ENCODE measurements at regions of chrX and their contacts with region 1.

Region 1: DNA sequence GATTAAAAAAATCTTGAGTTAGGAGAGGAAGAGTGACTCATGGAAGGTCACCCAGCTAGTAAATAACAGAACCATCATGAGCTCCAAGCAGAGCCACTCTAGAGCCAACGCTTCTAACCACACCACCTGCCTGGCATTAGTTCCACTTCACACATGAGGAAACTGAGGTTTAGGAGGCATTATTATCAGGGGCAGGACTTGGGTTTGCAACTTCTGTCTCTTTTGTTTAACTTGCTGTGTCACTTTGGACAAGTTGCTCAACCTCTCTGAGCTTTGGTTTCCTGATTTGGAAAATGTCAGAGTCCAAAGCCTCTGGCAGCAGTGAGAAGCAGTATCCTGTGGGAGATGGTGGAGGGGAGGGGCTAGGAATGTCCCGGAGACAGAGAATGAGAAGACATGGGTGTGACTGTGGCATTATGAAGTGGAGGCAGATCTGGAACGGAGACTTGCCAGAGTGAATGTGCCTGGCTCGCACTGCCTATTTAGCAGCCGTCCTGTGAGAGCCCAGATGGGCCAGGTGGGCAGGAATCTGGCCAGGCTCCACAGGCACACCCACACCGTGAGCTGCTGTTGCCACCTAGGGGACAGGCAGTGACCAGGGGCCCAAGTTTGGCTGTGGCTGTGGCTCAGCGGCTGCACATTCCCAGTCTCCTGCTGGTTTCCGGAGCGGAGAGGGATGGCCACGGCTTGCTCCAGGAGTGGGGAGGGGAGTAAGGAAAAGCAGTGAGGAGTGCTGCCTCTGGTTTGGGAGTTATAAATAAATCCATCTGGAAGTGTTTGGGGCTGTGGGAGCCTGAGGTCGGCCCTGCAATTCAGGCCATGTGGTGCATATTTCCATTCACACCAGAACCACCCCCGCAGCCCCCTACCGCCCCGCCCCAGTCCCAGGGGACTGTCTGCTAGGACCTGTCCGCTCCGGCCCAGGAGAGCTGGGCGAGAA is 93.4 kb downstream of the NHSL2 start:
- DNase-seq: no peak
- ATAC-seq: peak; percentile 32
- H3K4me3 ChIP-seq: no peak overlapping the region
- H3K27ac ChIP-seq: no peak overlapping the region
- H3K4me1 ChIP-seq: no peaks in the 10 kb centered on the region
- H3K27me3 ChIP-seq: no peaks in the 10 kb centered on the region
- CTCF ChIP-seq: no peak

Region 2: DNA sequence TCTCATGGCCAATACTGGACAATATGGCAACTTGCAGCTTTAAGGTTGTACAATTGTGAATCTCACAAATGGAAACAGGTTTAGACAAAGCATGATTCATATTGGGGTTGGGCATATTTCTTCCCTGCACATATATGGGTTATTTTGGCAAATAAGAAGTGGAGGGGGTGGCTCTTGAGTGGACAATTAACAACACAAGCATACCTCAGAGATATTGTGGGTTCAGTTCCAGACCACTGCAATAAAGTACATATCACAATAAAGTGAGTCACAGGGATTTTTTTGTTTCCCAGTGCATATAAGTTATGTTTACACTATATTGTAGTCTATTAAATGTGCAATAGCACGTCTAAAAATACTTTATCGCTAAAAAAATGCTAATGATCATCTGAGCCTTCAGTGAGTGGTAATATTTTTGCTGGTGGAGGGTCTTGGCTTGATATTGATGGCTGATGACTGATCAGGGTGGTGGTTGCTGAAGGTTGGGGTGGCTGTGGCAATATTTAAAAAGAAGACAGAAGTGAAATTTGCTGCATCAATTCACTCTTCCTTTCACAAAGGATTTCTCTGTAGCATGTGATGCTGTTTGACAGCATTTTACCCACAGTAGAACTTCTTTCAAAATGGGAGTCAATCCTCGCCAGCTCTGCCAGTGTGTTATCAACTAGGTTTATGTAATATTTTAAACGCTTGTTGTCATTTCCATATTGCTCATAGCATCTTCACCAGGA is 521.7 kb before region 1 on chrX:
- intact Hi-C with region 1: no loop called
- DNase-seq: no peak
- ATAC-seq: no peak
- H3K4me3 ChIP-seq: no peak overlapping the region
- H3K27ac ChIP-seq: no peak overlapping the region
- H3K4me1 ChIP-seq: no peaks in the 10 kb centered on the region
- H3K27me3 ChIP-seq: no peaks in the 10 kb centered on the region
- CTCF ChIP-seq: no peak

Region 3: GRCh38 chrX:71949844-71950445 is 54.1 kb before region 1 on chrX:
- intact Hi-C with region 1: no loop called
- DNase-seq: no peak
- ATAC-seq: no peak
- H3K4me3 ChIP-seq: no peak overlapping the region
- H3K27ac ChIP-seq: no peak overlapping the region
- H3K4me1 ChIP-seq: no peaks in the 10 kb centered on the region
- H3K27me3 ChIP-seq: no peaks in the 10 kb centered on the region
- CTCF ChIP-seq: no peak

Region 4: GRCh38 chrX:72131317-72132294 is 127.5 kb after region 1 on chrX and contains the start of gene RTL5:
- intact Hi-C with region 1: loop called (anchors 10 kb)
- DNase-seq: peak; percentile 92
- ATAC-seq: peak; percentile 95
- H3K4me3 ChIP-seq: peak within 1 kb of the TSS; percentile 56
- H3K27ac ChIP-seq: peak within 1 kb of the TSS; percentile 30
- H3K4me1 ChIP-seq: no peaks in the 10 kb centered on the region
- H3K27me3 ChIP-seq: no peaks in the 10 kb centered on the region
- CTCF ChIP-seq: peak; percentile 10
- total RNA-seq, gene RTL5: 9.2 TPM